ENCODE measurements at regions of chr7 and their contacts with region 1.

Region 1: GRCh38 chr7:128343554-128344430 is at the start of gene RBM28:
- DNase-seq: peak; percentile 90
- ATAC-seq: peak; percentile 96
- H3K4me3 Mint-ChIP-seq: peak within 1 kb of the TSS; percentile 84
- H3K27ac Mint-ChIP-seq: peak within 1 kb of the TSS; percentile 91
- H3K4me1 Mint-ChIP-seq: peaks cover 25% of the 10 kb centered on the region
- H3K27me3 Mint-ChIP-seq: peaks cover 9% of the 10 kb centered on the region
- total RNA-seq, gene RBM28: 55.0 to 55.2 TPM

Region 2: GRCh38 chr7:127392566-127393367 is 951.0 kb before region 1 on chr7 and contains the start of gene ZNF800:
- CTCF ChIA-PET with region 1: no interaction called
- POLR2A ChIA-PET with region 1: no interaction called
- intact Hi-C with region 1: loop called (anchors 5 kb)
- DNase-seq: peak; percentile 93
- ATAC-seq: peak; percentile 81
- H3K4me3 Mint-ChIP-seq: peak within 1 kb of the TSS; percentile 87
- H3K27ac Mint-ChIP-seq: peak within 1 kb of the TSS; percentile 96
- H3K4me1 Mint-ChIP-seq: peaks cover 62% of the 10 kb centered on the region
- H3K27me3 Mint-ChIP-seq: no peaks in the 10 kb centered on the region
- total RNA-seq, gene ZNF800: 27.5 to 34.7 TPM

Region 3: GRCh38 chr7:128304212-128304611 is 39.6 kb before region 1 on chr7:
- CTCF ChIA-PET with region 1: no interaction called
- POLR2A ChIA-PET with region 1: no interaction called
- intact Hi-C with region 1: no loop called
- DNase-seq: no peak
- ATAC-seq: no peak
- H3K4me3 Mint-ChIP-seq: no peak overlapping the region
- H3K27ac Mint-ChIP-seq: no peak overlapping the region
- H3K4me1 Mint-ChIP-seq: no peaks in the 10 kb centered on the region
- H3K27me3 Mint-ChIP-seq: no peaks in the 10 kb centered on the region

Region 4: GRCh38 chr7:128361411-128362379 is 17.9 kb after region 1 on chr7 and contains the start of gene PRRT4:
- CTCF ChIA-PET with region 1: interaction called, 28 read pairs
- POLR2A ChIA-PET with region 1: interaction called, 3 read pairs
- intact Hi-C with region 1: loop called in 1 of 2 experiments (anchors 2 kb)
- DNase-seq: peak; percentile 59
- ATAC-seq: peak; percentile 53
- H3K4me3 Mint-ChIP-seq: peak within 1 kb of the TSS; percentile 68
- H3K27ac Mint-ChIP-seq: peak within 1 kb of the TSS; percentile 64
- H3K4me1 Mint-ChIP-seq: peaks cover 24% of the 10 kb centered on the region
- H3K27me3 Mint-ChIP-seq: peaks cover 48% of the 10 kb centered on the region
- total RNA-seq, gene PRRT4: 0.23 to 0.39 TPM

Region 5: GRCh38 chr7:128398016-128398840 is 54.4 kb after region 1 on chr7:
- CTCF ChIA-PET with region 1: interaction called, 321 read pairs
- POLR2A ChIA-PET with region 1: no interaction called
- intact Hi-C with region 1: no loop called
- DNase-seq: peak; percentile 65
- ATAC-seq: peak; percentile 59
- H3K4me3 Mint-ChIP-seq: no peak overlapping the region
- H3K27ac Mint-ChIP-seq: no peak overlapping the region
- H3K4me1 Mint-ChIP-seq: peaks cover 5% of the 10 kb centered on the region
- H3K27me3 Mint-ChIP-seq: no peaks in the 10 kb centered on the region

Region 6: GRCh38 chr7:128455551-128456254 is 111.9 kb after region 1 on chr7 and contains the start of gene HILPDA:
- CTCF ChIA-PET with region 1: interaction called, 8 read pairs
- POLR2A ChIA-PET with region 1: no interaction called
- intact Hi-C with region 1: loop called (anchors 1 to 10 kb)
- DNase-seq: peak; percentile 98
- ATAC-seq: peak; percentile 81
- H3K4me3 Mint-ChIP-seq: peak within 1 kb of the TSS; percentile 83
- H3K27ac Mint-ChIP-seq: peak within 1 kb of the TSS; percentile 99
- H3K4me1 Mint-ChIP-seq: peaks cover 60% of the 10 kb centered on the region
- H3K27me3 Mint-ChIP-seq: peaks cover 8% of the 10 kb centered on the region
- total RNA-seq, gene HILPDA: 227 to 309 TPM

Region 7: GRCh38 chr7:128862571-128863432 is 519.0 kb after region 1 on chr7 and contains the start of gene ATP6V1F:
- CTCF ChIA-PET with region 1: no interaction called
- POLR2A ChIA-PET with region 1: interaction called, 3 read pairs
- intact Hi-C with region 1: loop called in 1 of 2 experiments (anchors 1 kb)
- DNase-seq: peak; percentile 100
- ATAC-seq: peak; percentile 91
- H3K4me3 Mint-ChIP-seq: peak within 1 kb of the TSS; percentile 77
- H3K27ac Mint-ChIP-seq: peak within 1 kb of the TSS; percentile 90
- H3K4me1 Mint-ChIP-seq: peaks cover 13% of the 10 kb centered on the region
- H3K27me3 Mint-ChIP-seq: no peaks in the 10 kb centered on the region
- total RNA-seq, gene ATP6V1F: 109 to 159 TPM